Heart right ventricle (tissue), 16 donors: ENCODE measurements at regions of chr1 and their contacts with region 1.

Region 1: GRCh38 chr1:206912445-206913095 is 9.2 kb downstream of the FCMR start:
- DNase-seq: peak in 1 of 2 donors; percentile 76
- ATAC-seq: peak; percentile 28 to 82 (median 66)
- H3K4me3 ChIP-seq: no peak overlapping the region
- H3K27ac ChIP-seq: no peak overlapping the region
- H3K4me1 ChIP-seq: peaks cover 4 to 29% (median 6%) of the 10 kb centered on the region in 9 donors
- H3K27me3 ChIP-seq: peaks cover 0 to 32% (median 15%) of the 10 kb centered on the region in 7 donors
- CTCF ChIP-seq: peak; percentile 68 to 91 (median 85)

Region 2: DNA sequence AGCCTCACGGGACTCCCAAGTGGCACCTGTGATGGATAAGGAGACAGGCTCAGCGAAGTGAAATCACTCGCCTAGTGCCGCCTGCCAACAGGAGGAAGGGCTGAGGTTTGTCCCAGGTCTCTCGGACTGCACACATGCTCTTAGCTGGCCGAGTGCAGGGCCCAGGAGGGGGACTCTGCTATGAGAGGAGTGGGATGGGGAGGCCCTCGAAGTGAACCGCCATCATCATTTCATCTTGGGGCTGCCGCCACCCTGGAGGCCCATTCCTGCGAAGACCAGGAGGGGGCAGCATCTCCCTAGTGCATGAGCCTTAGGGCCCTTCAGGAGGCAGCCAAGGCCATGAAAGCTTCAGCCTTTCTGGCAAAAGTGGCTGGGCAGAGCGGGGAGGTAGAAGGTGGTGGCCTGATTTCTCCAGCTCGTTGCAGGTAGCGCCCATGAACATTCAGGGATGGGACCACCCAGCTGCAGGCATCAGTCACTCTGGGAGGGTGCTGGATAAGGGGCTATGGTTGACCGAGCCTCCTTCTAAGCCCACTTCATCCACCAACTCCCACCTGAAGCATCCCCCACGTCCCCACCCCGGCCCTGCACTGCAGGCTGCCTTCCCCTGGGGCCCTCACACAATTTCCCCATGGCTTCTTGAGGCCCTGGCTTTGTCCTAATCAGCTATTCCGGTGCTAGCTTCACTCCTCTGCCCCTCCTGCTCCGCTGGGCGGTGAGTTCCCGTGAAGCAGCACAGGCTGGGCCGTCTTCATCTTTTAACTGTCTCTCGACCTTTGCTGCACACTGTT is 422.4 kb before region 1 on chr1:
- intact Hi-C with region 1: loop called in 5 of 10 experiments (anchors 10 kb)
- DNase-seq: peak; percentile 74 to 76
- ATAC-seq: peak; percentile 80 to 91 (median 84)
- H3K4me3 ChIP-seq: no peak overlapping the region
- H3K27ac ChIP-seq: no peak overlapping the region
- H3K4me1 ChIP-seq: peaks cover 0 to 26% (median 20%) of the 10 kb centered on the region in 9 donors
- H3K27me3 ChIP-seq: no peaks in the 10 kb centered on the region
- CTCF ChIP-seq: peak; percentile 85 to 98 (median 94)

Region 3: GRCh38 chr1:206725109-206725963 is 187.2 kb before region 1 on chr1:
- intact Hi-C with region 1: loop called in 8 of 10 experiments (anchors 2 to 10 kb)
- DNase-seq: no peak
- ATAC-seq: no peak
- H3K4me3 ChIP-seq: no peak overlapping the region
- H3K27ac ChIP-seq: peak overlapping the region in 9 of 10 donors; percentile 12 to 95 (median 86)
- H3K4me1 ChIP-seq: peaks cover 35 to 95% (median 84%) of the 10 kb centered on the region in 9 donors
- H3K27me3 ChIP-seq: no peaks in the 10 kb centered on the region
- CTCF ChIP-seq: peak; percentile 30 to 75 (median 54)

Region 4: GRCh38 chr1:206808615-206809014 is 104.0 kb before region 1 on chr1:
- intact Hi-C with region 1: loop called in 7 of 10 experiments (anchors 5 to 10 kb)
- DNase-seq: peak in 1 of 2 donors; percentile 34
- ATAC-seq: peak in 7 of 8 donors; percentile 68 to 85 (median 75)
- H3K4me3 ChIP-seq: no peak overlapping the region
- H3K27ac ChIP-seq: no peak overlapping the region
- H3K4me1 ChIP-seq: peaks cover 0 to 17% (median 0%) of the 10 kb centered on the region in 9 donors
- H3K27me3 ChIP-seq: peaks cover 0 to 4% (median 0%) of the 10 kb centered on the region in 7 donors
- CTCF ChIP-seq: peak in 8 of 9 donors; percentile 21 to 56 (median 48)

Region 5: DNA sequence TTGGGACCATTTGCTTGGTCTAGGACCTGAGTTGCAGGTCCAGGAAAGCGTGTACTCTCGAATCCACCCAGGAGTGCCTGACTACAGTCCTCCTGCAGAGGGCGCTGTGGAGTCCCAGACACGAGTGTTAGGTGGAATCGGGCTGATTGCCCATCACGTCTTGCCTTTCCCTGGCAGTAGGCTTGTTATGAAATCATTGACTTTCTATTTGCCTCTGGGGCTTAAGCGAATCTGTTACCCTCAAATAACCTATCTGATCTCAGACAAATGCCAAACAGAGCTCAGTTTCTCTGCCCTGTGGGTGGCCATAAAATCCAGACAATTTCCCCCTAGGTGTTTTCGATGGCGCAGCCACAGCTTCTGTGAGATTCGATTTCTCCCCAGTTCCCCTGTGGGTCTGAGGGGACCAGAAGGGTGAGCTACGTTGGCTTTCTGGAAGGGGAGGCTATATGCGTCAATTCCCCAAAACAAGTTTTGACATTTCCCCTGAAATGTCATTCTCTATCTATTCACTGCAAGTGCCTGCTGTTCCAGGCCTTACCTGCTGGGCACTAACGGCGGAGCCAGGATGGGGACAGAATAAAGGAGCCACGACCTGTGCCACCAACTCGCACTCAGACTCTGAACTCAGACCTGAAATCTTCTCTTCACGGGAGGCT is 47.4 kb before region 1 on chr1 and contains the start of gene IL20:
- intact Hi-C with region 1: loop called in 8 of 10 experiments (anchors 1 to 5 kb)
- DNase-seq: peak; percentile 66
- ATAC-seq: peak; percentile 25 to 89 (median 76)
- H3K4me3 ChIP-seq: no peak within 1 kb of the TSS
- H3K27ac ChIP-seq: no peak within 1 kb of the TSS
- H3K4me1 ChIP-seq: peaks cover 0 to 7% (median 0%) of the 10 kb centered on the region in 9 donors
- H3K27me3 ChIP-seq: peaks cover 0 to 21% (median under 1%) of the 10 kb centered on the region in 7 donors
- CTCF ChIP-seq: peak; percentile 49 to 87 (median 70)
- total RNA-seq, gene IL20: not detected

Region 6: GRCh38 chr1:207084701-207085180 is 172.2 kb after region 1 on chr1:
- intact Hi-C with region 1: no loop called
- DNase-seq: peak in 1 of 2 donors; percentile 53
- ATAC-seq: peak in 7 of 8 donors; percentile 33 to 76 (median 66)
- H3K4me3 ChIP-seq: no peak overlapping the region
- H3K27ac ChIP-seq: no peak overlapping the region
- H3K4me1 ChIP-seq: peaks cover 0 to 13% (median 0%) of the 10 kb centered on the region in 9 donors
- H3K27me3 ChIP-seq: no peaks in the 10 kb centered on the region
- CTCF ChIP-seq: peak; percentile 32 to 73 (median 61)